ENCODE measurements at regions of chr17 and their contacts with region 1.

Region 1: GRCh38 chr17:49997791-49998703 is 3.0 kb upstream of the DLX3 start:
- DNase-seq: peak; percentile 14
- H3K4me3 ChIP-seq: no peak overlapping the region
- H3K27me3 ChIP-seq: peaks cover 35% of the 10 kb centered on the region
- CTCF ChIP-seq: peak; percentile 92

Region 2: GRCh38 chr17:49707608-49708514 is 290.2 kb before region 1 on chr17 and contains the start of gene SLC35B1:
- CTCF ChIA-PET with region 1: interaction called, 19 read pairs
- POLR2A ChIA-PET with region 1: no interaction called
- DNase-seq: peak; percentile 98
- H3K4me3 ChIP-seq: peak within 1 kb of the TSS; percentile 92
- H3K27me3 ChIP-seq: no peaks in the 10 kb centered on the region
- CTCF ChIP-seq: peak; percentile 95
- polyA plus RNA-seq, gene SLC35B1: 116 and 120 TPM in 2 replicates

Region 3: DNA sequence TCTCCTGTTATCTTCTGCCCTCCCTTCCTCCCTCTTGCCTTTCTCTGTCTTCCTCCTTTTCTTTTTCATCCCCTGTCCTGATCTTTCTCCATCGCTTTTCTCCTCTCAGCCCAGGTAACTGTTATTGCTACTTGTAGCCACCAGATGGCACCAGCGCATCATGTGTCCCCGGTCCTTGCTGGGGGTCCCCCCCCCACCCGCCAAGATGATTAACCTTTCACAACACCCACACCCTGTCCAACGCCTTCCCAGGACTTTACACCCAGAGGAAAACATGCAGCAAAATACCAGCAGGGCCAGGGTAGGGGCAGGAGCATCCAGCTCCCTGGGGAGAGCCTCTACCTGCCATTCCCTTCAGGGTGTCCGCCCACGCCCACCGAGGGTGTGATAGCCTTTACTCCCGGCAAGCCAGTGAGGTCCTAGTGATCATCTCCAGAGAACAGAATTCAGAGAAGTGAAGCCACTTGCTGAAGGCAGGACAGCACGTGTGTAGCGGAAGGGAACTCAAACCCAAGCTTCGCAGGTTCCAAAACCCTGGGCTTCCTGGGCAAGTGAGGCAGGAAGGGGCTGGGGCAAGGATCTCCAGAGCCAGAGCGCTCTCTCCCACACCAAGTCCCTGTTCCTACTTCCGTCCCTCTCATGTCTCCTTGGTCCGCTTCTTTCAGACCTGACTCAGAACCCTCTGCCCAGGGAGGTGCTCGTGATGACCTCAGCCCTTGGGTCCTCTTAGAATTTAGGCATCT is 136.7 kb before region 1 on chr17:
- CTCF ChIA-PET with region 1: interaction called, 464 read pairs
- POLR2A ChIA-PET with region 1: no interaction called
- DNase-seq: no peak
- H3K4me3 ChIP-seq: no peak overlapping the region
- H3K27me3 ChIP-seq: peaks cover 8% of the 10 kb centered on the region
- CTCF ChIP-seq: peak; percentile 86

Region 4: GRCh38 chr17:49899191-49899485 is 98.9 kb before region 1 on chr17:
- CTCF ChIA-PET with region 1: interaction called, 13 read pairs
- POLR2A ChIA-PET with region 1: no interaction called
- DNase-seq: no peak
- H3K4me3 ChIP-seq: no peak overlapping the region
- H3K27me3 ChIP-seq: peaks cover 42% of the 10 kb centered on the region
- CTCF ChIP-seq: peak; percentile 20; the same call in 1 of the 2 replicates

Region 5: DNA sequence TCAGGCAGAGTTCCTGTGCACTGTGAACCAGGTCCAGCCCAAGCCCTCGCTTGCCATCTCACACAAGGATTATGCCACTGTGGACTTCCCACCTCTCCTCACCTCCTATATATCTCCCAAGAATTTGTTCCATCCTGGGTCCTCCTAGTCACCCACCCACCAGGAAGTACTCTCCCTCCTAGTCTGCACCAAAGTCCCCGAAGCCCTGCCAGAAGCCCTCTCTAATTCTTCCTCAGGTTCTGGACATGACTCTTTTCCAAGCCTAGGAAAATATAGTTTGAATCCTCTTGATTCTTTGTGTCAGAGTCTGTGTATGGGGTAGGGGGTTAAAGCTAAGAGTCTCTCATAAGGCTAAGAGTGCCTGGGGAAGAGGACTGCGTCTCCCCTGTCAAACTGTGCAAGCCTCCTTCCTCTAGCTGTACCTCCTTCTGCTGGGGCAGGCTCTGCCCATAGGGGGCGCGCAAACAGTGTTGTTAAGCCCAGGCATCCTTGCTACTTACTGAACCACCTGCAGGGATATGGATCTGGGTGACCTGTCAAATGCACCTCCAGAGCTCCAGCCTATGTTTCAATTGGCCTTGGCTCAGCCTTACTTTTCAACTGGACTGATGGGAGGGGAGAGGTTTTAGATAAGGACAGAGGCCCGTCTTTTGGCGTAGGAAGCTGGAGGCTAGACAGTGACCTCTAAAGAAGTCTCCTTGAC is 45.7 kb before region 1 on chr17:
- CTCF ChIA-PET with region 1: interaction called, 110 read pairs
- POLR2A ChIA-PET with region 1: no interaction called
- DNase-seq: no peak
- H3K4me3 ChIP-seq: no peak overlapping the region
- H3K27me3 ChIP-seq: peaks cover 15% of the 10 kb centered on the region
- CTCF ChIP-seq: peak; percentile 95

Region 6: GRCh38 chr17:49980703-49981197 is 17.3 kb before region 1 on chr17:
- CTCF ChIA-PET with region 1: interaction called, 71 read pairs
- POLR2A ChIA-PET with region 1: no interaction called
- DNase-seq: no peak
- H3K4me3 ChIP-seq: no peak overlapping the region
- H3K27me3 ChIP-seq: peaks cover 29% of the 10 kb centered on the region
- CTCF ChIP-seq: no peak

Region 7: GRCh38 chr17:50037321-50038071 is 39.4 kb after region 1 on chr17:
- CTCF ChIA-PET with region 1: no interaction called
- POLR2A ChIA-PET with region 1: no interaction called
- DNase-seq: no peak
- H3K4me3 ChIP-seq: no peak overlapping the region
- H3K27me3 ChIP-seq: no peaks in the 10 kb centered on the region
- CTCF ChIP-seq: no peak

Region 8: DNA sequence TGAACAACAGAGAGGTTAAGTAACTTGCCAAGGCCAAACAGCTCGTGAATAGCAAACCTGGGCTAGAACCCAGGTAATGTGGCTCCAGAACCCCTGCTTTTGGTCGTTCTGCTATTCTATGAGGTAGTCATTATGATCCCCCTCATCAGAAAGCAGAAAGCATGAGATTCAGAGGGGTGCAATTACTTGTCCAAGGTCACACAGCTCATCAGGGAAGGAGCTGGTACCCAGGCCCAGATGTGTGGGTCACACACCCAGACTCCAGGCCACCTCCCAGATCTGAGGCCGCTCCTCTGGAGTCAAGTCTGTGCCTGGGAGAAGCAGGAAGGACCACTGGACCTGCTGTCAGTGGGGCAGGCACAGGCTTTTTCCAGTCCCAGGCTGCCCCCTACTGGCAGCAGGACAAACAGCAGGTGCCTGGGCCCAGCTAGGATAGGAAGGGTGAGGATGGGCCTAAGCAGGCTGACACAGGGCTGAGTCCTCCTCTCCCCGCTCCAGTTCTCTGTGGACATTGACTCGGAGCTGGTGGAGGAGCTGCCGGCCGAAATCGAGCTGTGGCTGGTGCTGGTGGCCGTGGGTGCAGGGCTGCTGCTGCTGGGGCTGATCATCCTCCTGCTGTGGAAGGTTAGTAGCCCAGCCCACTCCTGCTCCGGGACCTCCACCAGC is 89.3 kb after region 1 on chr17:
- CTCF ChIA-PET with region 1: interaction called, 39 read pairs
- POLR2A ChIA-PET with region 1: no interaction called
- DNase-seq: no peak
- H3K4me3 ChIP-seq: no peak overlapping the region
- H3K27me3 ChIP-seq: no peaks in the 10 kb centered on the region
- CTCF ChIP-seq: peak; percentile 98

Region 9: GRCh38 chr17:50638851-50639767 is 641.1 kb after region 1 on chr17:
- CTCF ChIA-PET with region 1: no interaction called
- POLR2A ChIA-PET with region 1: no interaction called
- DNase-seq: peak; percentile 75
- H3K4me3 ChIP-seq: no peak overlapping the region
- H3K27me3 ChIP-seq: no peaks in the 10 kb centered on the region
- CTCF ChIP-seq: no peak